ENCODE measurements at regions of chrX and their contacts with region 1.

Region 1: DNA sequence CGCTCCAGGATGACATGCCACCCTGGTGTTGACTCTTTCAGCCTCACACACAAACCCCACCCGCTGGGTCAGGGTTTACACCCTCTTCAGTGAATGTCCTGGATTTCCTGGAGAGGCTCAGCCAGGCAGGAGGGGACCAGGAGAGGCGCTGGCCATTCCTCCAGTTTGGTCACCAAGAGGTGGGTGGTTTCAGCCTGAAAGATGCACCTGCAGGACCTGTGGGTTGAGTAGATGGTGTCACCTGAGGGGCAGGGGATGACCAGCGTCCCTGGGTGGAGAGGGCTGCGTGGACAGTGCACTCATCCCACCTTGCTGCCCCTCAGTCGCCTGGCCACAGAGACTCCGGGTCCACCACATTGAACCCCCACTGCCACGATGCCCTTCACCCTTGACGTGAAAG is 179.7 kb downstream of the ASMT start:
- DNase-seq: peak in 1 of 2 experiments; percentile 34
- H3K4me3 ChIP-seq: no peak overlapping the region
- H3K27ac ChIP-seq: no peak overlapping the region
- H3K4me1 ChIP-seq: no peaks in the 10 kb centered on the region
- H3K27me3 ChIP-seq: peaks cover 55% of the 10 kb centered on the region
- CTCF ChIP-seq: no peak

Region 2: GRCh38 chrX:2589186-2590030 is 794.8 kb after region 1 on chrX:
- CTCF ChIA-PET with region 1: no interaction called
- POLR2A ChIA-PET with region 1: no interaction called
- intact Hi-C with region 1: loop called (anchors 5 kb)
- DNase-seq: no peak
- H3K4me3 ChIP-seq: no peak overlapping the region
- H3K27ac ChIP-seq: no peak overlapping the region
- H3K4me1 ChIP-seq: peaks cover 16% of the 10 kb centered on the region
- H3K27me3 ChIP-seq: no peaks in the 10 kb centered on the region
- CTCF ChIP-seq: no peak

Measured in PC-9 (cell line).